Mammary epithelial cell (primary cell): ENCODE measurements at regions of chr12 and their contacts with region 1.

Region 1: GRCh38 chr12:91355150-91356006 is 172.8 kb upstream of the DCN start:
- DNase-seq: peak; percentile 49
- H3K4me3 ChIP-seq: no peak overlapping the region
- H3K27ac ChIP-seq: no peak overlapping the region
- H3K4me1 ChIP-seq: no peaks in the 10 kb centered on the region
- H3K27me3 ChIP-seq: peaks cover 11% of the 10 kb centered on the region
- CTCF ChIP-seq: peak; percentile 82 to 94

Region 2: GRCh38 chr12:91109148-91109564 is 246.2 kb before region 1 on chr12:
- CTCF ChIA-PET with region 1: no interaction called
- dilution Hi-C with region 1: no loop called
- in situ Hi-C with region 1: no loop called
- intact Hi-C with region 1: loop called (anchors 1 kb)
- DNase-seq: peak; percentile 47
- H3K4me3 ChIP-seq: no peak overlapping the region
- H3K27ac ChIP-seq: no peak overlapping the region
- H3K4me1 ChIP-seq: no peaks in the 10 kb centered on the region
- H3K27me3 ChIP-seq: no peaks in the 10 kb centered on the region
- CTCF ChIP-seq: peak; percentile 72 to 79

Region 3: DNA sequence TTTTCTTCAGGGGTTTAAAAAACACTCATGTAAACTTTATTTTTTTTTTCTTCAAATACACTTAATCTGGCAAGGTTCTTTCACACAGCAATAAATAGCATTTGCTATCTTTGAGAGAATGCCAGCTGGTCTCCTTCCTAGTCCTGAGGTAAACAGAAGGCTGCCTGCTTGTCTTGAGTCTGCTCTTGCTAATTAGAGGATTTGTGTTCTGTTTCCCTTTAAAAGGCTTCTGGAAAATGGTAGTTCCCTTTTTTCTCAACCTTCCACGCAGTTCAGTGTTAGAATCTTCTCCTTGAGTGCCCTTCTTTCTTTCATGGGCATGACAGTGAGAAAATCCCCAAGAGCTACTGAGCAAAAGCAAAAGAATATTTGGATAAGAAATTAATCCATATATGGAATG is 80.5 kb before region 1 on chr12:
- CTCF ChIA-PET with region 1: no interaction called
- dilution Hi-C with region 1: no loop called
- in situ Hi-C with region 1: no loop called
- intact Hi-C with region 1: no loop called
- DNase-seq: no peak
- H3K4me3 ChIP-seq: no peak overlapping the region
- H3K27ac ChIP-seq: no peak overlapping the region
- H3K4me1 ChIP-seq: no peaks in the 10 kb centered on the region
- H3K27me3 ChIP-seq: no peaks in the 10 kb centered on the region
- CTCF ChIP-seq: no peak

Region 4: DNA sequence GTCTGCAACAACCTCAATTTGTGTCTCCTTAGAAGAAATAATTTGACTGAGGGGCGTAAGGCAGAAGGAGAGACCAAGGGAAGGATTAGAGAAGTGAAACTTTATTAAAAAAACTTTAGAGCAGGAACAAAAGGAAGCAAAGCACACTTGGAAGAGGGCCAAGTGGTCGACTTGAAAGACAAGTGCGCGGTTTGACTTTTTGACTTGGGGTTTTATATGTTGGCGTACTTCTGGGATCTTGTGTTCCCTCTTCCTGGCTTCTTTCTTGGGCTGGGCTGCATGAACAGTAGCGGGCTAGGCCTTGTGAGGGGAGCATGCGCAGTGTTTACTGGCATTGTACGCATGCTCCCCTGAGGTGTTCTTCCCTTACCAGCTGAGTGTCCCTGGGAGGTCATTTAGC is 196.5 kb after region 1 on chr12:
- CTCF ChIA-PET with region 1: no interaction called
- dilution Hi-C with region 1: no loop called
- in situ Hi-C with region 1: no loop called
- intact Hi-C with region 1: no loop called
- DNase-seq: no peak
- H3K4me3 ChIP-seq: no peak overlapping the region
- H3K27ac ChIP-seq: no peak overlapping the region
- H3K4me1 ChIP-seq: no peaks in the 10 kb centered on the region
- H3K27me3 ChIP-seq: peaks cover 9% of the 10 kb centered on the region
- CTCF ChIP-seq: no peak